Activated CD4-positive, alpha-beta T cell treated with anti-CD3 and anti-CD28 coated beads for 36 hours (primary cell): ENCODE measurements at regions of chr1 and their contacts with region 1.

Region 1: GRCh38 chr1:115275212-115275611 is 62.8 kb downstream of the NGF start:
- DNase-seq: no peak
- ATAC-seq: no peak
- H3K4me3 Mint-ChIP-seq: no peak overlapping the region
- H3K27ac Mint-ChIP-seq: no peak overlapping the region
- H3K4me1 Mint-ChIP-seq: peaks cover 5% of the 10 kb centered on the region
- H3K27me3 Mint-ChIP-seq: peaks cover 19% of the 10 kb centered on the region

Region 2: GRCh38 chr1:115138968-115139367 is 136.2 kb before region 1 on chr1:
- CTCF ChIA-PET with region 1: interaction called, 3 read pairs
- POLR2A ChIA-PET with region 1: no interaction called
- intact Hi-C with region 1: loop called in 1 of 2 experiments (anchors 5 kb)
- DNase-seq: peak; percentile 79
- ATAC-seq: peak; percentile 88
- H3K4me3 Mint-ChIP-seq: peak overlapping the region; percentile 11
- H3K27ac Mint-ChIP-seq: no peak overlapping the region
- H3K4me1 Mint-ChIP-seq: peaks cover 4% of the 10 kb centered on the region
- H3K27me3 Mint-ChIP-seq: peaks cover 11% of the 10 kb centered on the region

Region 3: GRCh38 chr1:115210302-115210711 is 64.9 kb before region 1 on chr1:
- CTCF ChIA-PET with region 1: no interaction called
- POLR2A ChIA-PET with region 1: no interaction called
- intact Hi-C with region 1: loop called in 1 of 2 experiments (anchors 10 kb)
- DNase-seq: no peak
- ATAC-seq: no peak
- H3K4me3 Mint-ChIP-seq: no peak overlapping the region
- H3K27ac Mint-ChIP-seq: no peak overlapping the region
- H3K4me1 Mint-ChIP-seq: no peaks in the 10 kb centered on the region
- H3K27me3 Mint-ChIP-seq: peaks cover 6% of the 10 kb centered on the region

Region 4: GRCh38 chr1:115469703-115470476 is 194.7 kb after region 1 on chr1:
- CTCF ChIA-PET with region 1: no interaction called
- POLR2A ChIA-PET with region 1: no interaction called
- intact Hi-C with region 1: loop called (anchors 5 kb)
- DNase-seq: peak; percentile 59
- ATAC-seq: peak; percentile 30
- H3K4me3 Mint-ChIP-seq: no peak overlapping the region
- H3K27ac Mint-ChIP-seq: no peak overlapping the region
- H3K4me1 Mint-ChIP-seq: peaks cover 5% of the 10 kb centered on the region
- H3K27me3 Mint-ChIP-seq: peaks cover 3% of the 10 kb centered on the region

Region 5: DNA sequence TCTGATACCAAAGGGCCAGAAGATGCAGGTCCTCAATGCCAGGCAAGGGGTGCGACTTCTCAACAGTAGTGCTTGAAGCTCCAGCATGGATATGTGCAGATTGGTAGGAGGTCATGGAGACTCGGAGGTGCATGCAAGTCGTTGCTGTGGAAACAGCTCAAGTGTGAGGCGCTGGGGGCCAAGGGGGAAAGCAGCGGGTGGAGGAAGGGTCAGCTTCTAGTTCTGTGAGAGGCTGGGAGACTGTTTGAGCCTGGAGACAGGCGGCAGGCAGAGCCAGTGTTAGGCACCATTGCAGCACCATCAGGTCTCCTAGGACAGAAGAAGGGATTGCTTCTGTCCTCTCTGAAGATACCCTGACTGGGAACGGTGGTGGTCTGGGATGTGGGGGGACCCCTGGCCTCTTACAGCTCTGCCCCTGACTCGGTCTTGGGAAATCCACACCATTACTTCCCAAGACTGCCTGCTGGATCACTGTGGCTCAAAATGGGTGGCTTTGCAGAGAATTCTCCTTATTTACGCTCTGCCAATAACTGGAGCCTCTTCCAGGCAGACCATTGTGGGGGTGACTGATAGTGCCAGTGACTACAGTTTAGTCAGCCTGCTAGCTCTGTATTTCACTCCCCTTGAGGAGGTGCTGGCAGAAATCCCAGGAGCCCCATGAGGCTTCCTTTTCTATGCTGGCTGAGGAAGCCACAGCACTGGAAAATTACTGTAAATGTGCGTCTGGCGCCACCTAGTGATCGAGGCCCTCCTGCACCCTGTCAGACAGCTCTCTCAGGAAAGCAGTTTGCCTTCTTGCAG is 320.3 kb after region 1 on chr1:
- CTCF ChIA-PET with region 1: interaction called, 3 read pairs
- POLR2A ChIA-PET with region 1: no interaction called
- intact Hi-C with region 1: loop called (anchors 2 to 10 kb)
- DNase-seq: peak; percentile 85
- ATAC-seq: peak; percentile 70
- H3K4me3 Mint-ChIP-seq: no peak overlapping the region
- H3K27ac Mint-ChIP-seq: no peak overlapping the region
- H3K4me1 Mint-ChIP-seq: no peaks in the 10 kb centered on the region
- H3K27me3 Mint-ChIP-seq: peaks cover 3% of the 10 kb centered on the region

Region 6: DNA sequence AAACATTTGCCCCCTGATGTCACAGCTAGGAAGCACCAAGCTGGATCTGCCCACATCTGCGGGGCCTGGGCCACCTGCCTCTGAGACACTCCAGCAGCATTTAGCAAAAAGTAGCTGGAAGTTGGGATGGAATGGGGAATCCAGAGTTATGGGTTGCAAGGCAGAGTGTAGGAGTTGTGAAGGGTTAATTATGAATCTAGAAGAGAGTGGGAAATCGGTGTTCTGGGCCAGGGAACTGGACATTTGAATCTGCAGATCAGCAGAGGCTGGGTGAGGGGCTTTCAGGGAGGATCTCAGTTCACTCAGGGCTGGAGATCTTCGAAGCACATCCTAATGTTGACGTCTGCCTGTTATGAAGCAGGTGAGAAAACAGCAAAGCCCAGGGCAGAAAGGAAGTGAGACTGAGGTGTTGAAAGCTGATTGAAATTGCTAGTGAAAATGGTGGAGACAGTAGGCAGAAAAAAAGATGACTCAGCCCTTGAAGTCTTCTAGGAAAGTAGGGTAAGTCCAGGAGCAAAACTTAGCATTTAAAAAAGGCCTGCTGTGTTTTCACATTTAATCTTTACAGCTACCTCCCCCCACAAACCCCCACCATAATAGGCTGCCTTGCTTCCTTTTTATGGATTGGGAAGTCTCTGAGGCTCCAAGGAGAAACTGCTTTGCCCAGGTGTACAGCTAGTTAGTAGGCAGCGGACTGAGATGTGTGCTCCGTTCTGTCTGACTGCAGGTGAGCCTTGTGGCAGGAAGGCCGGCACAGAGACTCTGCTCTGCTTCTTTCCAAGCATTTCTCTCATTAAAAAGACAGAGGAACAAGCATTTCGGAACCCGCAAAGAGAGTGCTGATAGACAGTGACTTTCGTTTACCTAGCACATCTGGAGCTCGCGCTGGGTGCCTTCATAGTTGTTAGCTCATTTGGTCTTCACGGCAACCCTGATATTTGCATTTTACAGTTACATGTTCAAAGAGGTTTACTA is 373.8 kb after region 1 on chr1:
- CTCF ChIA-PET with region 1: no interaction called
- POLR2A ChIA-PET with region 1: no interaction called
- intact Hi-C with region 1: loop called in 1 of 2 experiments (anchors 5 kb)
- DNase-seq: peak; percentile 53
- ATAC-seq: peak; percentile 92
- H3K4me3 Mint-ChIP-seq: no peak overlapping the region
- H3K27ac Mint-ChIP-seq: no peak overlapping the region
- H3K4me1 Mint-ChIP-seq: no peaks in the 10 kb centered on the region
- H3K27me3 Mint-ChIP-seq: peaks cover 8% of the 10 kb centered on the region